ENCODE measurements at regions of chr15 and their contacts with region 1.

Region 1: DNA sequence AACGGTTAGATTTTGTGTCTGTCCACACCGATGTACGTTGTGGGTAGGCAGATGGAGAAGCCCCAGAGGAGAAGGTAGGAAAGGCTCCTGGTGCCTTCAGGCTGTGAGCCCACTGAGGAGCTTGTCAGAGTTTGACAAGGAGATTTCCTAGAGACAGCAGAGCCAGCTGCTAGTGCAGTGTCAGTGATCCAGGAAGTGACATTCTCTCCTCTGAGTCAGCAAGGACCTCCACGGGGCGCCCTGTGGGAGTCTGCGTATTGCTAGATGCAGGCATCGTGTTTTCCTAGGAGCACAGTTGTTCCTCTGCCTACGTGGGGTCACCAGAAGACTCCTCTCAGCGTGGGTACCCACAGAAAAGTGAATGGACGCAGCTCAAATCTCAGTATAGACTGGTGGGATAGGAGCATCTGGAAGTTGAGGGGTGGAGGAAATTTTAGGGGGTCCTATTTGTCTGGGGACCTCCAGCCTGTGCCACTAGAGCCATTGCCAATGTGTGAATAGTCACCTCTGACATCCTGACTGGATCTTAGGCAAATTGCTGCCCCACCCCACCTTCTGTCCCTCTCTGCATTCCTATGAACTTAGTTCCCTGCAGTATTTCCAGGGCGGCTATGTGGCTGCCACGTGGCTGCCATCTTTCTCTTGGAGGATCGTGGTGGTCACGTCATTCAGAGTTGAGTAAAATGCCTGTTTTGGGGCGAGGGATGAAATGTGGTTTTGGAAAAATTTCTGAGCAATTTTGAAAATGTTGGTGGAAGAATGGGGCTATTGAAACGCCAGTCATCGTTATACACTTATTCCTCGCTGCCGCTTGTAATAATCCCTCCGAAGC is 84.8 kb upstream of the KLHL25 start:
- DNase-seq: no peak
- ATAC-seq: peak; percentile 68
- H3K4me3 ChIP-seq: no peak overlapping the region
- H3K27ac ChIP-seq: no peak overlapping the region
- H3K4me1 ChIP-seq: no peaks in the 10 kb centered on the region
- H3K27me3 ChIP-seq: peaks cover 32% of the 10 kb centered on the region
- CTCF ChIP-seq: no peak

Region 2: GRCh38 chr15:85854345-85855097 is 25.0 kb before region 1 on chr15:
- CTCF ChIA-PET with region 1: no interaction called
- POLR2A ChIA-PET with region 1: no interaction called
- in situ Hi-C with region 1: no loop called
- intact Hi-C with region 1: no loop called
- DNase-seq: no peak
- ATAC-seq: peak; percentile 82
- H3K4me3 ChIP-seq: peak overlapping the region in 1 of 2 experiments; percentile 26; a peak in 1 of 4 replicates
- H3K27ac ChIP-seq: no peak overlapping the region
- H3K4me1 ChIP-seq: no peaks in the 10 kb centered on the region
- H3K27me3 ChIP-seq: peaks cover 5% of the 10 kb centered on the region
- CTCF ChIP-seq: peak; percentile 87

Region 3: GRCh38 chr15:85955501-85956391 is 76.2 kb after region 1 on chr15:
- CTCF ChIA-PET with region 1: no interaction called
- POLR2A ChIA-PET with region 1: interaction called, 19 read pairs
- in situ Hi-C with region 1: no loop called
- intact Hi-C with region 1: no loop called
- DNase-seq: no peak
- ATAC-seq: no peak
- H3K4me3 ChIP-seq: no peak overlapping the region
- H3K27ac ChIP-seq: no peak overlapping the region
- H3K4me1 ChIP-seq: no peaks in the 10 kb centered on the region
- H3K27me3 ChIP-seq: 0 out of 2 replicates have a peak, but pooled peaks cover 2% of the 10 kb centered on the region
- CTCF ChIP-seq: no peak

Region 4: DNA sequence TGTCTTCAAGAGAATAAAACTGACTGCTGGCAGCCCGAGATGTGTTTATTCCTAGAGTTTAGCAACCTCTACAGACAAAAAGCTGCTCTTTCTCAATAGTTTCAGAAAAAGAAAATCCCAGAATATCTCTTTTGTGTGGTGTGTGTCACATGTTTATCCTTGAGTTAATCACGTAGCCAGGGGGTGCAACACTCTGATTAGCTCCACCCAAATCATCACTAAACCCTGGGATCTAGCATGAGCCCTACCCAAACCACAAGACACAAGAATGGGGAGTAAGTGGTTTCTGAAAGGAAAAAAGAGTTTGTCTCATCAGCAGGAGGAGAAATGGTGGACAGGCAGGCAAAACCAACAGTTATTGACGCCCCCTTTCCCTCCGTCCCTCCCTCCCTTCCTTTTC is 121.7 kb after region 1 on chr15:
- CTCF ChIA-PET with region 1: no interaction called
- POLR2A ChIA-PET with region 1: no interaction called
- in situ Hi-C with region 1: no loop called
- intact Hi-C with region 1: no loop called
- DNase-seq: no peak
- ATAC-seq: no peak
- H3K4me3 ChIP-seq: no peak overlapping the region
- H3K27ac ChIP-seq: no peak overlapping the region
- H3K4me1 ChIP-seq: no peaks in the 10 kb centered on the region
- H3K27me3 ChIP-seq: no peaks in the 10 kb centered on the region; the same call in 1 of the 2 replicates
- CTCF ChIP-seq: no peak

Region 5: GRCh38 chr15:86021281-86022264 is 142.0 kb after region 1 on chr15:
- CTCF ChIA-PET with region 1: no interaction called
- POLR2A ChIA-PET with region 1: no interaction called
- in situ Hi-C with region 1: no loop called
- intact Hi-C with region 1: no loop called
- DNase-seq: no peak
- ATAC-seq: no peak
- H3K4me3 ChIP-seq: no peak overlapping the region
- H3K27ac ChIP-seq: no peak overlapping the region
- H3K4me1 ChIP-seq: no peaks in the 10 kb centered on the region
- H3K27me3 ChIP-seq: 0 out of 2 replicates have a peak, but pooled peaks cover 2% of the 10 kb centered on the region
- CTCF ChIP-seq: no peak

Region 6: GRCh38 chr15:86079508-86080266 is 200.1 kb after region 1 on chr15 and contains the start of gene AGBL1:
- CTCF ChIA-PET with region 1: no interaction called
- POLR2A ChIA-PET with region 1: no interaction called
- in situ Hi-C with region 1: no loop called
- intact Hi-C with region 1: loop called (anchors 10 kb)
- DNase-seq: no peak
- ATAC-seq: peak; percentile 62; the same call in 1 of the 2 replicates
- H3K4me3 ChIP-seq: no peak within 1 kb of the TSS
- H3K27ac ChIP-seq: no peak within 1 kb of the TSS
- H3K4me1 ChIP-seq: no peaks in the 10 kb centered on the region
- H3K27me3 ChIP-seq: peaks cover 7% of the 10 kb centered on the region; the same call in 1 of the 2 replicates
- CTCF ChIP-seq: no peak
- total RNA-seq, gene AGBL1: not detected

Region 7: DNA sequence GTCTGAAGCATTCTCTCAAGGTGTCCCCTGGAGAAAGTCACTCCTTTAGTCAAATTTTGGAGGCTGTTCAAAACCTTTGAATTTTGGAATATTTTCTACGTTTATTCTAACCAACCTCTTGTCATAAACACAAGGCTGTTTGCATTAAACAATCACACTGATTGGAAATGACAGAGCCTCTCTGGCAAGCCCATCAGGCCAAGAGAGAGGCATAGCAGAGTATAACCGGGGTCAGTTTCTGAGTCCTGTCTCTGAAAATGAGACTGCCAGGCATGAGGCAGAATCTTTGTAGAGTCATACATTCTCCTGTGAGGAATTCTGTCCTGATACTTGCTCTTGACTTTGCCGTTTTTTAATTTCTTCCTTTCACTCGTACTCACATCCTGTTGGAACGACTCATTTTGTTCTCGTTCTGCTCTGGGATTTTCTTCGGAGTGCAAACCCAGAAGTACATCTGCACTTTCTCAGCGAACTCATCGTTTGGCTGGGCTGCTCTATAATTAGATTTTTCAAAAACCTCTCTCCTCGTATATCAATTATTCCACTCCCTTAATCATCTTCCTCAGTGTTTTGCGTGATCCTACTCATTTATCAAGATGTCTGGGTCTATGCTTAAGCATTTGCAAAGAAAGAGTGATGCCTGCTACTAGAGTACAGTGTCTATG is 314.3 kb after region 1 on chr15:
- CTCF ChIA-PET with region 1: no interaction called
- POLR2A ChIA-PET with region 1: no interaction called
- in situ Hi-C with region 1: no loop called
- intact Hi-C with region 1: no loop called
- DNase-seq: no peak
- ATAC-seq: peak; percentile 42; the same call in 1 of the 2 replicates
- H3K4me3 ChIP-seq: peak overlapping the region; percentile 8 to 26; a peak in 3 of 4 replicates
- H3K27ac ChIP-seq: no peak overlapping the region
- H3K4me1 ChIP-seq: no peaks in the 10 kb centered on the region
- H3K27me3 ChIP-seq: no peaks in the 10 kb centered on the region
- CTCF ChIP-seq: no peak

Measured in Panc1 (cell line).